T-cell (primary cell): ENCODE measurements at regions of chr10 and their contacts with region 1.

Region 1: DNA sequence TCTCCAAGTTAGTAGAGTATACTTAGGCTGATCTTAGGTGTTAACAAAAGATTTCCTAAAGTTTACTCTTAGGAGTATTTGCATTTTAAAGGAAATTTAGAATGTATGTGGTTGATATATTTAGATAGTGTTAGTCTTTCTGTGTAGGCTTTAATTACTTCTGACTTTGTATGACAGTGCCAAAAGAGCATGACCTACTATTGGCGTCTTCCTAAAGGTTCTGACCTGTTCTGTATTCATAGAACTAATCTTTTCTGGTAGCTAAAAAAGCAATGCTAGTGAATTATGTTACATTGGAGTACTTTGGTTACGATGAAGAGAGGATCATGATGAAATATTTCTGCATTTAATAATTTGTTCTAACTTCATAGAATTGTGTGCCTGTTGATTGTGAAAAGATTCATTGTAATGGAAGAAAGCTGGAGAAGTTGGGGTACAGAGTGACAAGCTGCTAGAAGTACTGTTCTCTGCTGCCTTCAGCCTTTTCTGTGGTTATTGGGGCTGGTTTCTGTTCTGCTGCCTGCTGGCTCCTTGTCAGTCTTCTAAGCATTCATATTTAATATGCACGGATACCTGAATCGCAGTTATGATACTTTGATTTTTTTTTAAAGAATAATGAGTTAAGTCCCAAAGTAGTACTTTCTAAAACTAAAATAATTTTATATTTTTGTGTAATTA is 13.2 kb downstream of the WAC start:
- DNase-seq: peak in 1 of 35 experiments; percentile 8
- ATAC-seq: peak in 1 of 4 experiments; percentile 53
- H3K4me3 ChIP-seq: no peak overlapping the region
- H3K4me3 Mint-ChIP-seq: peak overlapping the region in 1 of 3 donors; percentile 41
- H3K27ac ChIP-seq: no peak overlapping the region
- H3K27ac Mint-ChIP-seq: peak overlapping the region in 1 of 2 donors; percentile 41
- H3K4me1 ChIP-seq: peaks cover 15 to 31% of the 10 kb centered on the region in 2 experiments
- H3K4me1 Mint-ChIP-seq: peaks cover 81 to 84% (median 83%) of the 10 kb centered on the region in 3 donors
- H3K27me3 ChIP-seq: no peaks in the 10 kb centered on the region
- H3K27me3 Mint-ChIP-seq: no peaks in the 10 kb centered on the region

Region 2: DNA sequence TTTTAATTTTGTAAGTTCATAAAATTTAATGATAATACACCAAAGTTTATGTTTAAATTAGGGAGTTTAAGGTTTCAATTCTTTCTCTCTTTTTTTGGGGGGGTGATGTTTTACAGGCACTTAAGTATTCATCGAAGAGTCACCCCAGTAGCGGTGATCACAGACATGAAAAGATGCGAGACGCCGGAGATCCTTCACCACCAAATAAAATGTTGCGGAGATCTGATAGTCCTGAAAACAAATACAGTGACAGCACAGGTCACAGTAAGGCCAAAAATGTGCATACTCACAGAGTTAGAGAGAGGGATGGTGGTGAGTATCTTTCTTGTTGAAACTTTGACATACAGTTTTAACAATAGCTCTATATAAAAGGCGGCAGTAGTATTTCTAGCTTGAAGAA is 10.7 kb before region 1 on chr10:
- CTCF ChIA-PET with region 1: interaction called in 1 of 2 experiments, 6 read pairs
- POLR2A ChIA-PET with region 1: interaction called, 8 to 17 read pairs
- DNase-seq: no peak
- ATAC-seq: no peak
- H3K4me3 ChIP-seq: no peak overlapping the region
- H3K4me3 Mint-ChIP-seq: peak overlapping the region; percentile 37 to 92 (median 50)
- H3K27ac ChIP-seq: no peak overlapping the region
- H3K27ac Mint-ChIP-seq: peak overlapping the region in 1 of 2 donors; percentile 34
- H3K4me1 ChIP-seq: peaks cover 26 to 30% of the 10 kb centered on the region in 2 experiments
- H3K4me1 Mint-ChIP-seq: peaks cover 64 to 71% (median 69%) of the 10 kb centered on the region in 3 donors
- H3K27me3 ChIP-seq: no peaks in the 10 kb centered on the region
- H3K27me3 Mint-ChIP-seq: no peaks in the 10 kb centered on the region

Region 3: GRCh38 chr10:28569506-28570159 is 23.5 kb after region 1 on chr10:
- CTCF ChIA-PET with region 1: interaction called in 1 of 2 experiments, 3 read pairs
- POLR2A ChIA-PET with region 1: interaction called, 4 to 22 read pairs
- DNase-seq: no peak
- ATAC-seq: no peak
- H3K4me3 ChIP-seq: no peak overlapping the region
- H3K4me3 Mint-ChIP-seq: peak overlapping the region in 1 of 3 donors; percentile 12
- H3K27ac ChIP-seq: no peak overlapping the region
- H3K27ac Mint-ChIP-seq: peak overlapping the region; percentile 25 to 53
- H3K4me1 ChIP-seq: peaks cover 5 to 26% of the 10 kb centered on the region in 2 experiments
- H3K4me1 Mint-ChIP-seq: peaks cover 86 to 93% (median 93%) of the 10 kb centered on the region in 3 donors
- H3K27me3 ChIP-seq: no peaks in the 10 kb centered on the region
- H3K27me3 Mint-ChIP-seq: no peaks in the 10 kb centered on the region

Region 4: DNA sequence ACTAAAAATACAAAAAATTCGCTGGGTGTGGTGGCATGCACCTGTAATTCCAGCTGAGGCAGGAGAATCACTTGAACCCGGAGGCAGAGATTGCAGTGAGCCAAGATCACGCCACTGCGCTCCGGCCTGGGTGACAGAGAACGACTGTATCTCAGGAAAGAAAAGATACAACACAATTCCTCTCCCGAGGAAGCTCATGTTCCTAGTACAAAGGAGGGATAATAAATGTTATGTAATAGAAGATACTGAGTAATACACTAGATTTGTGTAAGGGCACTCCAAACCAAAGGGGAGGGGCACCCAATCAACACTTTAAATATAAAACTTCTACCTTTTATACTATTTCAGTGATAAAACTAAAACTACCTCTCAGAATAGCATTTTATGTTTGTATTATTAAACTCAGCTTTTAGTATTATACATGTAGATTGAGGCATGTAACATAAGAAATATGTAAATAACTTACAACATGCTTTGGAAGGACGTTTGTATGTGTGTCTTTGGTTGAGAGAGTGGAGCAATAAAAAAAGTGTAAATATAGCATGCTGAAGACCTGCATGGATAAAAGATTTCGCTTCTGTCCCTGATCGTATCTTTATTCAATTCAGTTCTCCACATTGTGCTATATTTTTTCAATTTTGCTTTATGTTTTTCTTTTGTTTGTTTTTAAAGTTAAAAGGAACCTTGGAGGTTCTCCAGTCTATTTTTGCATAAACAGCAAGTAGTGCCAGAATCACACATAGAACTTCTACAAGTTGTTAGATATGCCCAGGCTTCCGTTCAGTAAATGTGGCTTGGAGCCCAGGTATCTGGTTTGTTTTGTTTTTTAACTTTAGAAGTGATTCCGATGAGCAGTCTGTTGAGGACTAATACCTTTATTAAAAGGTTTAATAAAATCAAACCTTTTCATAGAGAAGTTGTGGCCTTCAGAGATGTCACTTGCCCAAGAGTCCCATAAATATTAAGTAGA is 58.7 kb after region 1 on chr10:
- CTCF ChIA-PET with region 1: no interaction called
- POLR2A ChIA-PET with region 1: no interaction called
- DNase-seq: no peak
- ATAC-seq: no peak
- H3K4me3 ChIP-seq: no peak overlapping the region
- H3K4me3 Mint-ChIP-seq: no peak overlapping the region
- H3K27ac ChIP-seq: no peak overlapping the region
- H3K27ac Mint-ChIP-seq: peak overlapping the region in 1 of 2 donors; percentile 6
- H3K4me1 ChIP-seq: peaks cover 0 to 6% of the 10 kb centered on the region in 2 experiments
- H3K4me1 Mint-ChIP-seq: peaks cover 58 to 69% (median 59%) of the 10 kb centered on the region in 3 donors
- H3K27me3 ChIP-seq: no peaks in the 10 kb centered on the region
- H3K27me3 Mint-ChIP-seq: no peaks in the 10 kb centered on the region